Activated CD8-positive, alpha-beta memory T cell treated with anti-CD3 and anti-CD28 coated beads, Interleukin-2, amount 10 ng/mL, durations not matched to agents 7 days and 5 days (primary cell): ENCODE measurements at regions of chr17 and their contacts with region 1.

Region 1: DNA sequence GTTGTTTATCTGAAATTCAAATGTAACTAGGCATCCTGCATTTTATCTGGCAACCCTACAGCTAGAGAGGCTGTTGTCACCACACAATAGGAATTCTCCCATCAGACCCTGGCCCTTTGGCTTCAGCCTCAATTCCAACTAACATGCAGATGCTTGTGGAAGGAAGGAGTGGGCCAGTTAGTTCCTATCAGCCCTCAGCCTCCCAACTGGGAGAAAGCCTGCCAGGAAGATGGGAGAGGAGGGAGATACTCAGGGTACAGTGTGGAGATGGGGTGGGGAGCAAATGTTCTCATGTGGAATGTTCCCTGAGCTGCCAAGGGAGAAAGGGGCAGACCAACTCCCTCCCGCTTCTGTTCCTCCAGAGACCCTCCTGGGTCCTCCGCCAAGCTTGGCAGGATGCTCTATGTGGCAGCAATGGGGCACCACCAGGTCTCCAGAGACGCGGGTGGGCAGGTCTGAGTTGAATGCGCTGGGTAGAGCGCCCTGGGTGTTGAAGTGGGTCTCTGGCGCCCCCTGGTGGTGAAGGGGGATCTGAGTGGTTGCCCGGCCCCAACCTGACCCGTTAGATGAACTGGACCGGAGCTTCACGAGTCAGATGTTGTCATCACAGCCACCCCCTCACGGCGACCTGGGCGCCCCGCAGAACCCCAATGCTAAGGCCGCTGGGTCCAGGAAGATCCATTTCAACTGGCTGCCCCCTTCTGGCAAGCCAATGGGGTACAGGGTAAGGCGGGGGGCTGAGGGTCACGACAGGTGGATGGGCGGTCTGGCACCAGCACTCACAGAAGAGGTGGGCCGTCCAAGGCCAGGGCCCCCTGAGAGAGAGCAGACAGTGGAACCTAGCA is 15.2 kb downstream of the GALK1 start:
- DNase-seq: peak; percentile 89
- ATAC-seq: peak; percentile 73
- H3K4me3 Mint-ChIP-seq: no peak overlapping the region
- H3K27ac Mint-ChIP-seq: no peak overlapping the region
- H3K4me1 Mint-ChIP-seq: peaks cover 18% of the 10 kb centered on the region
- H3K27me3 Mint-ChIP-seq: peaks cover 6% of the 10 kb centered on the region

Region 2: GRCh38 chr17:75271233-75271954 is 478.4 kb before region 1 on chr17:
- CTCF ChIA-PET with region 1: no interaction called
- DNase-seq: peak; percentile 90
- ATAC-seq: peak; percentile 87
- H3K4me3 Mint-ChIP-seq: peak overlapping the region; percentile 86
- H3K27ac Mint-ChIP-seq: peak overlapping the region; percentile 86
- H3K4me1 Mint-ChIP-seq: peaks cover 37% of the 10 kb centered on the region
- H3K27me3 Mint-ChIP-seq: no peaks in the 10 kb centered on the region

Region 3: DNA sequence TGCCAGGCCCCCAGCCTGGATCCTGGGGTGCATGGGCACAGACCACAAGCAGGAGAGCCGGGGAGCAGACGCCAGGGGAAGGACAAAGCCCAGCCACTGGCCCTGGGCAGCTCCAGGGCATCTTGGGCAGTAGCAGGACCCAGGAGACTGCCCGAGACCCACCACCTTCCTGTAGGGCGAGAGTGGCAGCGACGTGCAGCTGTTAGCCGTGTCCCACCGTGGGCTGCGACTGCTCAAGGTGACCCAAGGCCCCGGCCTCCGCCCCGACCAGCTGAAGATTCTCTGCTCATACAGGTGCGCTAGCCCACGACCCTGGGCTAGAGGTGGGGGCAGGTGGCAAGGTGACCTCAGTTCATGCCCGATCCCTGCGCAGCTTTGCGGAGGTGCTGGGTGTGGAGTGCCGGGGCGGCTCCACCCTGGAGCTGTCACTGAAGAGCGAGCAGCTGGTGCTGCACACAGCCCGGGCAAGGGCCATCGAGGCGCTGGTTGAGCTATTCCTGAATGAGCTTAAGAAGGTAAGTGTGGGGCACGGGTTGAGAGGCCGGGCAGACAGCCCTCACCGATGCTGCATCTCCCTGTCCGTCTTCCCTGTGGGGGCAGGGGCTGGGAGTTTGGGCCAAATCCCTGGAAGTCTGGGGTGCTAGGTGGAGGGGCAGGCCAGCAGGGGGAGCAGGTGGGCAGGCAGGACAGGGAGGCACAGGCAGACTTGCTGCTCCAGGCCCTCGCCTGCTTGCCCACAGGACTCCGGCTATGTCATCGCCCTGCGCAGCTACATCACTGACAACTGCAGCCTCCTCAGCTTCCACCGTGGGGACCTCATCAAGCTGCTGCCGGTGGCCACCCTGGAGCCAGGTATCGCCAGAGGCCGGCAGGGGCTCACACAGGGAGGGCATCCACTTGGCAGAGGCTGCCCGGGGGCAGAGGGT is 130.0 kb before region 1 on chr17:
- CTCF ChIA-PET with region 1: interaction called, 29 read pairs
- DNase-seq: peak; percentile 50
- ATAC-seq: no peak
- H3K4me3 Mint-ChIP-seq: no peak overlapping the region
- H3K27ac Mint-ChIP-seq: no peak overlapping the region
- H3K4me1 Mint-ChIP-seq: peaks cover 2% of the 10 kb centered on the region
- H3K27me3 Mint-ChIP-seq: no peaks in the 10 kb centered on the region

Region 4: GRCh38 chr17:75652915-75653549 is 96.7 kb before region 1 on chr17:
- CTCF ChIA-PET with region 1: interaction called, 12 read pairs
- DNase-seq: peak; percentile 62
- ATAC-seq: peak; percentile 87
- H3K4me3 Mint-ChIP-seq: no peak overlapping the region
- H3K27ac Mint-ChIP-seq: peak overlapping the region; percentile 54
- H3K4me1 Mint-ChIP-seq: peaks cover 5% of the 10 kb centered on the region
- H3K27me3 Mint-ChIP-seq: no peaks in the 10 kb centered on the region

Region 5: DNA sequence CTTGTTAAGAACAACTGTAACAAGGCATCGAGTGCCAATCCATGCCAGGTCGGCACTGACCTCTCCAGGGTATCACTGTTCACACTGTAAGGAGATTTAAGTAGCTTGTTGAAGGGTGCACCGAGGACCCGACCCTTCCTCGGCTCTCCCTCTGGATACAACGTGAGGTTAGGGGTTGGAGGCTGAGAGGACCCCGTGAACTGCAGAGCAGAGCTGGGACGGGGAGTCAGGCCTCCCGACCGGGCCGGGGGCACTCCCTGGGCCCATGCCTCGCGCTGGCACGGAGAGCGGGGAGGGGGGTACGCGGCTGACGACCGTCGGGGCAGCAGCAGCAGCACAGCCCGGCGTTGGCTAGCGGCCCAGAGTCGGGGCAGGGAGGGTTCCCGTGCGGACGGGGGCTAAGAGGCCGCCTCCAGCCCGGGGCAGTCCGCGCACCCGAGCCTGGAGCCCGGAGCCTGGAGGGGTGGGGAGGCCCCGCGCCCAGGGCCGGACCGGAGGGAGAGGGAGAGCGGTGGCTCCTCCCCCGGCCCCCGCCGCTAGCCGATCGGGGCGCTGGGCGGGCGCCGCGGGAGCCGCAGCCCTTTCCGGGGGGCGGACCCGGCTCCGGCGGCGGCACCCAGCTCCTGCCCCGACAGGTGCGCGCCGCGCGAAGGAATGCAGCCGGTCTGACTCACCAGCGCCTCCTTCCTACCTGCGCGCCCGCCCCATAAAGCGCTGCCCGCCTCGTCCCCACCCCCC is 28.9 kb before region 1 on chr17 and contains the start of gene ITGB4:
- CTCF ChIA-PET with region 1: interaction called, 41 read pairs
- DNase-seq: peak; percentile 64
- ATAC-seq: peak; percentile 95
- H3K4me3 Mint-ChIP-seq: peak within 1 kb of the TSS; percentile 69
- H3K27ac Mint-ChIP-seq: no peak within 1 kb of the TSS
- H3K4me1 Mint-ChIP-seq: peaks cover 3% of the 10 kb centered on the region
- H3K27me3 Mint-ChIP-seq: peaks cover 31% of the 10 kb centered on the region
- total RNA-seq, gene ITGB4: 1.0 to 1.1 TPM

Region 6: GRCh38 chr17:75784473-75785015 is 34.8 kb after region 1 on chr17 and contains the start of gene UNK:
- CTCF ChIA-PET with region 1: interaction called, 16 read pairs
- DNase-seq: peak; percentile 99
- ATAC-seq: peak; percentile 72
- H3K4me3 Mint-ChIP-seq: peak within 1 kb of the TSS; percentile 79
- H3K27ac Mint-ChIP-seq: peak within 1 kb of the TSS; percentile 100
- H3K4me1 Mint-ChIP-seq: peaks cover 50% of the 10 kb centered on the region
- H3K27me3 Mint-ChIP-seq: peaks cover 1% of the 10 kb centered on the region
- total RNA-seq, gene UNK: 32.8 to 33.1 TPM

Region 7: DNA sequence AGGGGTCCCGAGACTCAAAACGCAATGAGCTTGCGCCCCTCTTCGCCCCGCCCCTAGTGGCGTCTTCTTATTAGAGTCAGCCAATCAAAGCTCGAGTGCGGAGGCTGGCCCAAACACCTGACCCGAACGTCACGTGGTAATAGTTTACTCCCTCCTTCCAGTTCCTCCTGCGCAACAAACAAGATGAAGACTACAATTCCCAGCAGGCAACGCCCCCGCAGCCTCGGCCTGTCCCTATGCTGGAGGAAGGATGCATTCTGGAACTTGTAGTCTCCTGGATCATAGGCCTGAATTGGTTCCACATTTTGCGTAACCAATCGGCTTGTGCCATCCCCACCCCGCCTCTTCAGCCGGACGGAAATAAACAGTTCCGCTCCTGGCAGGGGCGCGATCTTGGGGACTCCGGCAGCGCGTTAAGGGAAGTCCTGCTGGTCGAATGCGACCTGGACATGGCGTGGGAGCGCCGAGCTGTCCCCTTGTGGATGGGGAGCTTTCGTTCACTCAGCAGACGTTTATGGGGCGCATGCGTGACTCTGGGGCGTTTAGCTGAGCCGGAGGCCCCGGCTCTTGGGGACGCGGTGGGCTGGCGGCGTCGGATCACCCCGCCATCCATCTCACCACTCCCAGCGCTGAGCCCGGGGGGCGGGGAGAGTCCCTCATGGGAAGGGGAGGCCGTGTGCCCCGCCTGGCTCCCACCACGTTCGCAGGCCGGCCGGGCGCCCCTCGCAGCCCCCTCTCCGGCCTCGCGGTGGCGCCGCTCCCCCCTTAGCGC is 105.7 kb after region 1 on chr17 and contains the start of gene WBP2:
- CTCF ChIA-PET with region 1: interaction called, 19 read pairs
- DNase-seq: peak; percentile 99
- ATAC-seq: peak; percentile 90
- H3K4me3 Mint-ChIP-seq: no peak within 1 kb of the TSS
- H3K27ac Mint-ChIP-seq: peak within 1 kb of the TSS; percentile 95
- H3K4me1 Mint-ChIP-seq: peaks cover 38% of the 10 kb centered on the region
- H3K27me3 Mint-ChIP-seq: no peaks in the 10 kb centered on the region
- total RNA-seq, gene WBP2: 71.3 to 79.1 TPM